CD8-positive, alpha-beta T cell (primary cell): ENCODE measurements at regions of chr12 and their contacts with region 1.

Region 1: GRCh38 chr12:89252284-89252683 is 100.0 kb downstream of the DUSP6 start:
- DNase-seq: no peak
- ATAC-seq: no peak
- H3K4me3 ChIP-seq: no peak overlapping the region
- H3K4me3 Mint-ChIP-seq: no peak overlapping the region
- H3K27ac ChIP-seq: no peak overlapping the region
- H3K27ac Mint-ChIP-seq: no peak overlapping the region
- H3K4me1 ChIP-seq: no peaks in the 10 kb centered on the region
- H3K4me1 Mint-ChIP-seq: peaks cover 6% of the 10 kb centered on the region
- H3K27me3 ChIP-seq: no peaks in the 10 kb centered on the region
- H3K27me3 Mint-ChIP-seq: peaks cover 2% of the 10 kb centered on the region
- CTCF ChIP-seq: no peak

Region 2: DNA sequence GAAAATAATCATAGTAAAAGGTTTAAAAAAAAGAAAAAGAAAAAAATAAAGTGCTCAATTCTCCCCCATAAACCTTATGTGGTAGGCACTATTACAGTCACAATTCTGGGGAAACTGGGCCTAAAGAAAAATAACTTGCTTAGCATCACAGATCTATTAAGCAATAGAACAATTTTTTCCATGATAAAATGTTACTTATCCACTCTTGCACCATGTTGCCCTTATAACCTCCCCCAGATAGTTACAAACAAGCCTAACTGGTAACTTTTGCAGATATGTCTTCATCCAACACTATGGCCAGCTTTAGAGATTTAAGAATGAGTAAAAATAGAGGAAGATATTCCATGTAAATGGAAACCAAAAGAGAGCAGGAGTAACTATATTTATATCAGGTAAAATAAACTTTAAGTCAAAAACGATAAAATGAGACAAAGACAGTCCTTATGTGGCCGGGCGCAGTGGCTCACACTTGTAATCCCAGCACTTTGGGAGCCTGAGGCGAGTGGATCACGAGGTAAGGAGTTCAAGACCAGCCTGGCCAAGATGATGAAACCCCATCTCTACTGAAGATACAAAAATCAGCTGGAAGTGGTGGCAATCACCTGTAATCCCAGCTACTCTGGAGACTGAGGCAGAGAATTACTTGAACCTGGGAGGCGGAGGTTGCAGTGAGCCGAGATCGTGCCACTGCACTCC is 64.6 kb before region 1 on chr12:
- CTCF ChIA-PET with region 1: no interaction called
- POLR2A ChIA-PET with region 1: no interaction called
- intact Hi-C with region 1: loop called in 1 of 2 experiments (anchors 2 kb)
- DNase-seq: no peak
- ATAC-seq: no peak
- H3K4me3 ChIP-seq: no peak overlapping the region
- H3K4me3 Mint-ChIP-seq: no peak overlapping the region
- H3K27ac ChIP-seq: no peak overlapping the region
- H3K27ac Mint-ChIP-seq: no peak overlapping the region
- H3K4me1 ChIP-seq: no peaks in the 10 kb centered on the region
- H3K4me1 Mint-ChIP-seq: no peaks in the 10 kb centered on the region
- H3K27me3 ChIP-seq: no peaks in the 10 kb centered on the region
- H3K27me3 Mint-ChIP-seq: no peaks in the 10 kb centered on the region
- CTCF ChIP-seq: no peak

Region 3: GRCh38 chr12:90028635-90029051 is 776.4 kb after region 1 on chr12:
- CTCF ChIA-PET with region 1: no interaction called
- POLR2A ChIA-PET with region 1: no interaction called
- intact Hi-C with region 1: no loop called
- DNase-seq: no peak
- ATAC-seq: no peak
- H3K4me3 ChIP-seq: no peak overlapping the region
- H3K4me3 Mint-ChIP-seq: no peak overlapping the region
- H3K27ac ChIP-seq: no peak overlapping the region
- H3K27ac Mint-ChIP-seq: no peak overlapping the region
- H3K4me1 ChIP-seq: no peaks in the 10 kb centered on the region
- H3K4me1 Mint-ChIP-seq: peaks cover 9% of the 10 kb centered on the region
- H3K27me3 ChIP-seq: no peaks in the 10 kb centered on the region
- H3K27me3 Mint-ChIP-seq: peaks cover 2% of the 10 kb centered on the region
- CTCF ChIP-seq: no peak